Ascending aorta (tissue), 2 donors: ENCODE measurements at regions of chr11 and their contacts with region 1.

Region 1: GRCh38 chr11:68206187-68206601 is 6.9 kb downstream of the KMT5B start:
- DNase-seq: no peak
- H3K4me3 ChIP-seq: no peak overlapping the region
- H3K27ac ChIP-seq: no peak overlapping the region
- H3K4me1 ChIP-seq: peaks cover 3 to 22% of the 10 kb centered on the region in 2 donors
- H3K27me3 ChIP-seq: no peaks in the 10 kb centered on the region
- CTCF ChIP-seq: peak; percentile 41 to 83 (median 79)

Region 2: DNA sequence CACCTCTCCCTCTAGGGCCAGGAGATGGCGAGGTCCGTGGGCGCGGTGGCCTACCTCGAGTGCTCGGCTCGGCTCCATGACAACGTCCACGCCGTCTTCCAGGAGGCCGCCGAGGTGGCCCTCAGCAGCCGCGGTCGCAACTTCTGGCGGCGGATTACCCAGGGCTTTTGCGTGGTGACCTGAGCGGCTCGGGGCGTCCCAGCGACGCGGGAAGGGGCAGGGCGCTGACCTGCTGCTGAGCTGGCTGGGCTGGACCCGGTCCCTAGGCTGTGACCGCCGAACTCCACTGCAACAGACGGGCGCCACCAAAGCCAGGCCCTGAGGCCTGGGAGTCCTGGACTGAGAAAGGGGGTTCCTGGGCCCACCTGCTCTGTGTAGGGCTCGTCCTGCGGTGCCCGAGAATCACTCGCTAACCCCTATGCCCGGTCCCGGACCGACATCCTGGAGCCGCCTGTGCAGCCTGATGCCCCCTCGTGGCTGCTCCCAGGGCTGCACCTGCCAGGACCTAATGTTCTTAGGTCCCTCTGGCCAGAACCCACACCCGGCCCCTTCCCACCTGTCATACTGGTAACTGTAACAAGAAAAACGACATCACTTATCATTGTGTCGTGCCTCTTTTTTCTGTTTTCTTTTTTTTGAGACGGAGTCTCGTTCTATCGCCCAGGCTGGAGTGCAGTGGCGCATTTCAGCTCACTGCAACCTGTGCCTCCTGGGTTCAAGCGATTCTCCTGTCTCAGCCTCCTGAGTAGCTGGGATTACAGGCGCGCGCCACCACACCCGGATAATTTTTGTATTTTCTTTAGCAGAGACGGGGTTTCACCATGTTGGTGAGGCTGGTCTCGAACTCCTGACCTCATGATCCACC is 1134.5 kb before region 1 on chr11:
- intact Hi-C with region 1: no loop called
- DNase-seq: peak; percentile 20 to 86
- H3K4me3 ChIP-seq: peak overlapping the region in 1 of 2 donors; percentile 33
- H3K27ac ChIP-seq: no peak overlapping the region
- H3K4me1 ChIP-seq: no peaks in the 10 kb centered on the region
- H3K27me3 ChIP-seq: no peaks in the 10 kb centered on the region
- CTCF ChIP-seq: peak; percentile 72 to 89 (median 84)

Region 3: GRCh38 chr11:68003846-68004550 is 202.2 kb before region 1 on chr11 and contains the start of gene UNC93B1:
- intact Hi-C with region 1: loop called (anchors 10 kb)
- DNase-seq: peak; percentile 63 to 94
- H3K4me3 ChIP-seq: peak within 1 kb of the TSS; percentile 83 to 88
- H3K27ac ChIP-seq: peak within 1 kb of the TSS; percentile 50 to 63
- H3K4me1 ChIP-seq: peaks cover 0 to 2% of the 10 kb centered on the region in 2 donors
- H3K27me3 ChIP-seq: no peaks in the 10 kb centered on the region
- CTCF ChIP-seq: no peak
- total RNA-seq, gene UNC93B1: 74.7 TPM

Region 4: DNA sequence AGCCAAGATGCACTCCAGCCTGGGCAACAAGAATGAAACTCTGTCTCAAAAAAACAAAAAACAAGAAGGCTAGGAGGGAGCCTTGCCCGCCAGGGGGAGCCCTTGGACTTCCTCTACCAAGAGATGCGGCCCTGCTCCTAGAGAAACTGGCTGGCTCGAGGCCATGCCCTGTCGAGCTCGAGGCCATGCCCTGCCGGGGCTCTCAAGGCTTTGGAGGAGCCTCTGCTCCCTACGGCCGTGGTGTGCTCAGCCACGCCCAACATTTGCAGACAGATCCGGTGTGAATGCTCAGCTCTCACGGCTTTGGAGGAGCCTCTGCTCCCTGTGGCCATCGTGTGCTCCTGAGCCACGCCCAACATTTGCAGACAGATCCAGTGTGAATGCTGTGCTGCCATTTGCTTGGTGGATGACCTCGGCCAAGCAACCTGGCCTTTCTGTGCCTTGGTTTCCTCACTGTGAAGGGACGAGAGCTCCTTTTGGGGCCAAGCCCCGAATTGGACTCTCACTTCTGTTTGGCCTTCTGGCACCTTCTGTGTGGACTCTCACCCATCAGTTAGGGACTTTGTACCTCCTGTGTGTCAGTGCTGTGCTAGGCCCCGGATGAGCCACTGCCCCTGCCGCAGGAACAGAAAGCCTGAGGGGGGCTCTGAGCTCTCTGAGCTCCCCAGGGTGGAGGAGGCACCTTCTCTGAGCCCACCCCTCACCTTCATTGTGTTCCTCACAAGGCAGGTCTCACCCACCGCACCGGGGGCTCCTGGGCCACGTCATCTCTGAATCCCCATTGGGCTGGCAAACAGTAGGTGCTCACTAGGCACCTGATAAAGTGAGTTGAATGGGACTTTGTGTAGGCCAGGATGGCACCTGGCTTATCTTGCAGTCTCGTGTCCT is 51.5 kb after region 1 on chr11:
- intact Hi-C with region 1: loop called (anchors 5 kb)
- DNase-seq: peak; percentile 75 to 98
- H3K4me3 ChIP-seq: peak overlapping the region in 1 of 2 donors; percentile 51
- H3K27ac ChIP-seq: peak overlapping the region; percentile 10 to 37
- H3K4me1 ChIP-seq: peaks cover 0 to 3% of the 10 kb centered on the region in 2 donors
- H3K27me3 ChIP-seq: no peaks in the 10 kb centered on the region
- CTCF ChIP-seq: peak; percentile 75 to 94 (median 90)

Region 5: DNA sequence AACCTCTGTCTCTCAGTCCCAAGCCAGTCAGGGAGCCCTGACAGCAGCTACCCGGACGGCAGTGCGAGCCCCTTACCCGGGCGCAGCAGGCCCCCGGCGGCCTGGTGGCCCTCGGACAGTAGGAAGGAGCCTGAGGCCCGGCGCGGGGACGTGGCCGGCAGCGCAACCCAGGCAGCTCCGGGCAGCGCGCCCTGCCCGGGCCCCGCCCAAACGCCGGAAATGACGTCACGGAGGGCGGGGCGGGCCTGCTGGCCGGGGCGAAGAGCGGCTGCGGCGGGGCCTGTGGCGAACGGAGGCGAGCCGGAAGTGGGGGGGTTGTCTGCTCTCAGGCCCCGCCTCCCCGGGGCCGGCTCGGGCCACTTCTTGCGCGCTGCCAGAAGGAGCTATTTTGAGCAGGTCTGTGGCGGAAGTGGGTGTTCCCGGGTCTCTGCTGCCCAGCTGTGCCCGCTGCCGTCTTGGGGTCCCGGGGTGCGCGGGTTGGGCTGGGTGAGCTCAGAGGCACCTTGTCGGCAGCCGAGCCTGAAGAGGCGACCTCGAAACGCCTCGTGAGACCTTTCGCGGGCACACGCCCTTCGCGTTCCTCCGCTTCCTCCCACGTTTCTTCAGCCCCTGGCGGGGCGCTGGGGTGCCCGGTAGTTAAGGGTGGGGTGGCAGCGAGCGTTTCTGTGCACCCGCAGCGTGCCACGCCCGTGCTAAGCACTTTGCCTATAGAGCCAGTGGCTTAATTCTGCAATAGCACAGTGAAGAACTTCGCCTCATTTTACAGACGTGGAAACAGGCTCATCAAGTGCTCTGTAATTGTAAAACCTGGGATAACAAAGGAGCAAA is 65.8 kb after region 1 on chr11 and contains the start of gene C11orf24:
- intact Hi-C with region 1: no loop called
- DNase-seq: peak; percentile 80 to 96
- H3K4me3 ChIP-seq: peak within 1 kb of the TSS; percentile 78 to 82
- H3K27ac ChIP-seq: peak within 1 kb of the TSS; percentile 91 to 94
- H3K4me1 ChIP-seq: peaks cover 8 to 19% of the 10 kb centered on the region in 2 donors
- H3K27me3 ChIP-seq: no peaks in the 10 kb centered on the region
- CTCF ChIP-seq: no peak
- total RNA-seq, gene C11orf24: 123 TPM

Region 6: DNA sequence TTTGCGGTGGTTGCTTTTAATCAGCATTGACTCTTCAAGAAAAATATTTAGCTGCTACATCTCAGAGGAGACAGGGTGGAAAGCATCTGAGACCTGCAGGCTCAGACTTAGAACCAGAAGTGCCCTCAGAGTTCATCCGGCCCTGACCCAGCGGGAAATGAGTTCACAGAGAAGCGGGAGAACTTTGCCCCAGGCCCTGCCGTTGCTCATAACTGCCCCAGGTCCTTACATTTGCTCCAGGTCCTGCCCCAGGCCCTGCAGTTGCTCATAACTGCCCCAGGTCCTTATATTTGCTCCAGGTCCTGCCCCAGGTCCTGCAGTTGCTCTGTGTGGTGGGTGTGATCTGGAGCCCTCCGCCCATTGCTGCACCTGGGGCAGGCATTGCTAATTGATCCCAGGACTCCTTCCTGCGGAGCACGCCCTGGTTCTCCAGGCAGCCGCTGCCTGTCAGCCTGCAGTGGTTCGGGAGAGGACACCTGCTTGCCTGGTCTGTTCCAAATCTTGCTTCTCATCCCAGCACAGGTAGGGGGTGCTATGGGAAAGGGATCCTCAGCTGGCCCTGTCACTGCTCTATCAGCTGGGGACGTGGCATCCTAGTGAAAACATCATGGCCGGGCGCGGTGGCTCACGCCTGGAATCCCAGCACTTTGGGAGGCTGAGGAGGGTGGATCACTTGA is 196.3 kb after region 1 on chr11:
- intact Hi-C with region 1: no loop called
- DNase-seq: no peak
- H3K4me3 ChIP-seq: no peak overlapping the region
- H3K27ac ChIP-seq: no peak overlapping the region
- H3K4me1 ChIP-seq: peaks cover 6 to 12% of the 10 kb centered on the region in 2 donors
- H3K27me3 ChIP-seq: no peaks in the 10 kb centered on the region
- CTCF ChIP-seq: no peak